ENCODE measurements at regions of chr9 and their contacts with region 1.

Region 1: GRCh38 chr9:73497796-73498195 is 346.1 kb downstream of the ANXA1 start:
- DNase-seq: no peak
- H3K4me3 ChIP-seq: no peak overlapping the region
- CTCF ChIP-seq: no peak

Region 2: GRCh38 chr9:73219985-73220626 is 277.7 kb before region 1 on chr9:
- in situ Hi-C with region 1: loop called (anchors 10 kb)
- DNase-seq: no peak
- H3K4me3 ChIP-seq: no peak overlapping the region
- CTCF ChIP-seq: no peak

Region 3: DNA sequence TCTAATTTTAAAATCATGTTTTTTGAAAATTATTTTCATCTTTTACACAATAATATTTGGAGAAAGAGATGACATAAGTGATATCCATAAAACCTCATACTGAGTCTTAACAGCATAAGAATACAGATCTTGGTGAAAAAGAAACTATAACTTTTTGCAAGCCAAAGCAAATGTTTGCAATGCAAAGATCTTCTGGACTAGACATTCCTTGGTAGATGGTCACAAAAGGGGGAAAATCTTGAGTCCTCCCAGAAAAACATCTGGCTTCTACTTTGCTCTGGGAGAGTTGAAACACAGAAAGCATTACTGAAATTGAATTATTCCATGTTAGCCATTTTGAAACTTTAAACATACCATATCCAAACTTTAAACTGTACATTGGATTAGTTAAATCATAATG is 38.0 kb before region 1 on chr9:
- in situ Hi-C with region 1: no loop called
- DNase-seq: no peak
- H3K4me3 ChIP-seq: no peak overlapping the region
- CTCF ChIP-seq: no peak

Region 4: DNA sequence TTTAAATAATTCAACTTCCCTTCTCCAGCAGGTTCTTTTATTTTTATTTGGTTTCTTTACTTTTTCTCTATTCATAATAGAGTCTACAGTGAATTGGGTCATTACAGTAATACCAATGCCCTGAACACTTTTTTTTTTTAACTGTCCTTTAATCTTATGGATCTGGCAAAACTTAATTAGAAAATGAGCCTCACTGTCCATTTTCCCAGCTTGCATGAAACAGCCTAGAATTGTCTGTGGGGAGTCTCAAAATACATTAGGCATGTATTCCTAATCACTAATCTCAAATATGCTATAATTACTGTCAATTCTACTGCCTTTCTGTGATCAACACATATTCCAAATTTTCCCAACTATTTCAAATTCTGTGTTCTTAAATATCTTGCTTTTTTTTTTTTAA is 60.7 kb after region 1 on chr9:
- in situ Hi-C with region 1: no loop called
- DNase-seq: no peak
- H3K4me3 ChIP-seq: no peak overlapping the region
- CTCF ChIP-seq: no peak